ENCODE measurements at regions of chr12 and their contacts with region 1.

Region 1: GRCh38 chr12:6285063-6285477 is 25.4 kb upstream of the PLEKHG6 start:
- DNase-seq: peak; percentile 73 to 95
- ATAC-seq: peak; percentile 65 to 80
- H3K4me3 ChIP-seq: no peak overlapping the region
- H3K27ac ChIP-seq: peak overlapping the region; percentile 34 to 64; a peak in 2 of 6 replicates
- H3K4me1 ChIP-seq: peaks cover 25% of the 10 kb centered on the region
- CTCF ChIP-seq: peak; percentile 97
- EP300 ChIP-seq: no peak
- POLR2A ChIP-seq: no peak
- RAD21 ChIP-seq: peak; percentile 97 to 100

Region 2: GRCh38 chr12:6039894-6040568 is 245.0 kb before region 1 on chr12:
- CTCF ChIA-PET with region 1: interaction called, 13 read pairs
- POLR2A ChIA-PET with region 1: no interaction called
- DNase-seq: peak; percentile 72 to 79
- ATAC-seq: peak; percentile 75 to 87
- H3K4me3 ChIP-seq: no peak overlapping the region
- H3K27ac ChIP-seq: no peak overlapping the region
- H3K4me1 ChIP-seq: peaks cover 7% of the 10 kb centered on the region; the same call in 2 of the 3 replicates
- CTCF ChIP-seq: peak; percentile 90
- EP300 ChIP-seq: no peak
- POLR2A ChIP-seq: no peak
- RAD21 ChIP-seq: peak; percentile 91 to 96

Region 3: DNA sequence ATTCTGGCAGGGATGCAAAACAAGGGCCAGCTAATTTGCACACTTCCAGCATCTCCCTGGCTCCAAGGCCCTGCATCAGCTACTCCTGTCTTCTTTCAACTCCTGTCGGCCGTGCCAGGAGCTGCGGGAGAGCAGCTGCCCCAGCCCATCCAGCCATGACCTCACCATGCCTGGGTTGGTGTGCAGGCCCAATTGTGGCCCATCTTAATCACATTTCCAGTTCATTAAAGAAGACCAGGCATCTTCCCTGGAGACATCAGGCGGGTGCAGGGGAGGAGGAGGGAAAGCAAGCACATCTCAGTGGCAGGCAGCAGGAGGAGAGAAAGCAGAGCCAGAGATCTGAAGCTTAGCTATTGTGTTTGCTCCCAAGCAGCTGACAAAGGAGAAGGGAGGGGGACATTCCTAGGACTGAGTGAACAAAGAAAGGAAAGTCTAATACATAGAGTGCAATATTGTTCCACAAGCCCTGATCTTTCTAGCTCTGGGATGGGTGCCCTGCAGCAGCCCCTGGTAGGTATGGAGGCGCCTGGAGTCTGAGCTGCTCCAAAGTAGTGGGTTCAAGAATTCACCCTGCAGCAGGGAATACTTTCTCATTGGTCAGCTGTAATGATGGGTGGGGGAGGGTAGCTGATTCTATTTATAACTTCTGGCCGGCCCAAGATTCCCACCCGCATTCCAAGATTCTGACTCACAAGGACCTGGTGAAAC is 200.7 kb before region 1 on chr12:
- CTCF ChIA-PET with region 1: interaction called, 11 read pairs
- POLR2A ChIA-PET with region 1: no interaction called
- DNase-seq: peak; percentile 46 to 57
- ATAC-seq: peak; percentile 35 to 55; a peak in 3 of 6 replicates
- H3K4me3 ChIP-seq: no peak overlapping the region
- H3K27ac ChIP-seq: peak overlapping the region in 1 of 2 experiments; percentile 31; a peak in 1 of 6 replicates
- H3K4me1 ChIP-seq: peaks cover 20% of the 10 kb centered on the region
- CTCF ChIP-seq: no peak
- EP300 ChIP-seq: no peak
- POLR2A ChIP-seq: no peak
- RAD21 ChIP-seq: no peak

Region 4: DNA sequence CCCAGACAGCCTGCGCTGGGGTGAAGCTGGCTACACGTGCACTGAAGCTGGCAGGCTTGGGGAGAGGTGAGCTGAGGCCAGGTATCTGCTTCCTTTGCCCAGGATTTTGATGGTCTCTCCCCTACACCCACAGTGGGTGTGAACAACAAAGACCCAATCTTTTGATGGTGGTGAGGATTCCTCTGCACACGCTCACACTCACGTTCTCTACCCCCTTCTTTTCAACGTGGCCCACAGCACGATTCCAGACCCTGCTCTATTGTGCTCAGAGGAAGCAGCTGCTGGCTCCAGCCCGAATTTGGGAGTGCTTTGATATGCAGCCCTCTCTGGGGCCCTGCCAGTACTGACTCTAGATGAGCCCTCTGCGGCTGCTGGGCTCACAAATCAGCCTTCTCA is 79.9 kb before region 1 on chr12:
- CTCF ChIA-PET with region 1: interaction called, 529 read pairs
- POLR2A ChIA-PET with region 1: interaction called, 7 read pairs
- DNase-seq: no peak
- ATAC-seq: no peak
- H3K4me3 ChIP-seq: no peak overlapping the region
- H3K27ac ChIP-seq: peak overlapping the region in 1 of 2 experiments; percentile 16; a peak in 1 of 6 replicates
- H3K4me1 ChIP-seq: peaks cover 33% of the 10 kb centered on the region
- CTCF ChIP-seq: no peak
- EP300 ChIP-seq: no peak
- POLR2A ChIP-seq: no peak
- RAD21 ChIP-seq: no peak

Region 5: GRCh38 chr12:6250343-6250742 is 34.7 kb before region 1 on chr12:
- CTCF ChIA-PET with region 1: interaction called, 11 read pairs
- POLR2A ChIA-PET with region 1: no interaction called
- DNase-seq: no peak
- ATAC-seq: peak; percentile 26 to 43; a peak in 3 of 6 replicates
- H3K4me3 ChIP-seq: no peak overlapping the region
- H3K27ac ChIP-seq: no peak overlapping the region
- H3K4me1 ChIP-seq: no peaks in the 10 kb centered on the region
- CTCF ChIP-seq: no peak
- EP300 ChIP-seq: no peak
- POLR2A ChIP-seq: no peak
- RAD21 ChIP-seq: no peak

Region 6: GRCh38 chr12:6307529-6307928 is 22.5 kb after region 1 on chr12:
- CTCF ChIA-PET with region 1: interaction called, 29 read pairs
- POLR2A ChIA-PET with region 1: no interaction called
- DNase-seq: no peak
- ATAC-seq: no peak
- H3K4me3 ChIP-seq: no peak overlapping the region
- H3K27ac ChIP-seq: no peak overlapping the region
- H3K4me1 ChIP-seq: peaks cover 4% of the 10 kb centered on the region; the same call in 2 of the 3 replicates
- CTCF ChIP-seq: no peak
- EP300 ChIP-seq: no peak
- POLR2A ChIP-seq: no peak
- RAD21 ChIP-seq: no peak